ENCODE measurements at regions of chr4 and their contacts with region 1.

Region 1: DNA sequence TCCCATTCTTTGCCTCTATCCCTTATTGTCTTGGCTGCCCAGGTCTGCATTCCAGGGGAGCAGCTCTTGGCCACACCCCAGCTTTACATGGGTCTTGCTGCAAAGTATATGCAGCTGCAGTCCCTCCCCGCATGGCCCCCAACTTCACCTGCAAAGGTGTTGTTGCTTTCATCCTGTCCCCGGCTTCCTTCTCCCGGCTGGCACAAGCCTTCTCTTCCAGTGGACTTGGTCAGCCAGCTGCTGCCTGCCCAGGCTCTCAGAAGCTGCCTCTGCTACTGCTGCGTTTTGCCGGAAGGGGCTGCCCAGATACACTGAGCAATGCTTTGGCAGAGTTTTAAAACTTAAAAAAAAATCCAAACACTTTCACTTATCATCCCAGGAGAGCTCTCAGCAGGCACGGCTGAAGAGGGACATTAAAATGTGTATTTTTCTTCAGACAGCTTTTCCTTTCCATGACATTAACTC is 121.2 kb upstream of the PDLIM3 start:
- DNase-seq: peak; percentile 53
- H3K4me3 ChIP-seq: peak overlapping the region; percentile 17 to 21
- H3K27ac ChIP-seq: peak overlapping the region; percentile 77 to 78
- H3K4me1 ChIP-seq: peaks cover 7% of the 10 kb centered on the region
- H3K27me3 ChIP-seq: no peaks in the 10 kb centered on the region
- CTCF ChIP-seq: peak in 2 of 4 experiments; percentile 44 to 61
- POLR2A ChIP-seq: no peak

Region 2: GRCh38 chr4:185721190-185721932 is 64.9 kb after region 1 on chr4:
- intact Hi-C with region 1: loop called (anchors 5 kb)
- DNase-seq: no peak
- H3K4me3 ChIP-seq: no peak overlapping the region
- H3K27ac ChIP-seq: peak overlapping the region; percentile 61 to 64
- H3K4me1 ChIP-seq: peaks cover 6% of the 10 kb centered on the region
- H3K27me3 ChIP-seq: no peaks in the 10 kb centered on the region
- CTCF ChIP-seq: no peak
- POLR2A ChIP-seq: no peak

Region 3: GRCh38 chr4:185738038-185738552 is 81.6 kb after region 1 on chr4:
- intact Hi-C with region 1: loop called (anchors 5 kb)
- DNase-seq: no peak
- H3K4me3 ChIP-seq: no peak overlapping the region
- H3K27ac ChIP-seq: peak overlapping the region; percentile 45 to 62
- H3K4me1 ChIP-seq: no peaks in the 10 kb centered on the region
- H3K27me3 ChIP-seq: no peaks in the 10 kb centered on the region
- CTCF ChIP-seq: no peak
- POLR2A ChIP-seq: no peak

Region 4: GRCh38 chr4:185774845-185775680 is 118.6 kb after region 1 on chr4:
- intact Hi-C with region 1: loop called (anchors 10 kb)
- DNase-seq: no peak
- H3K4me3 ChIP-seq: no peak overlapping the region
- H3K27ac ChIP-seq: peak overlapping the region; percentile 40 to 41
- H3K4me1 ChIP-seq: no peaks in the 10 kb centered on the region
- H3K27me3 ChIP-seq: no peaks in the 10 kb centered on the region
- CTCF ChIP-seq: no peak
- POLR2A ChIP-seq: no peak

Region 5: DNA sequence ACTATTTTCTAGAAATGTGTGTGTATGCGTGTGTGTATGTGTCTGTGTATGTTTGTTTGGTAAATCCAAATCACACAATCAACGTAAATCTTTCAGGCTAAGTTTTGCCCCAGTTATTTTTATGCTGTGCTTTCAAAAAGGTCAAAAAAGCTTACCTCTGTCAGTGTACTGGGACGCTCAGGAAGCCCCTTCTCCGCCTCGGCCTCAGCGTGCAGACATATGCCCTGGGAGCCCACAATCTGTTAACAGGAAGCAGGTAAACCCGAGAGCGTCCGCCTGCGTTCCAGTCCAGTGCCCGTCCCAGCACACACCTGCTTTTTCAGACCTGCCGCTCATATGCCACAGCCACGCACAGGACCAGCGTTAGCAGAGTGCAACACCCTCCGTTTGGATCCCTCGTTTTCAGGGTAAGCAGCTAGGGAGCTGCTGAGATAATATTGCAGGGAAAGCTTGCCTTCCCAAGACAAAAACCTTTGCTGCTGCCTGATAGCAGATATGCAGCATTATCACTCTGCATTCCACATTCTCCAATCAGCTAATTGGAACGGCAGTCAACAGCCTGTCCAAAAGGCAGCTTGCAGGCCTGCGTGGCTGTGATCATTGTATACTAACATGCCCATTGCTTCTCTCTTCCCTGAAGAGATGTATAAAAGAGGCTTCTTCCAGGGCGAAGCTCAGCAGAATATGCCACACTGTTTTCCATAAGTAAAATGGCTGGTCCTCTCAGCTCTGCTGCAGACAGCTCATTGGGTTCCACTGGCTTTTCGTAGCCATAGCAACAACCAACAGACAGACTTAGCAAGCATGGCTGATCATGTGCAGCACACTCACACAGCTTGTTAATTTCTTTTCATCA is 155.2 kb after region 1 on chr4 and contains the start of gene SORBS2:
- intact Hi-C with region 1: loop called (anchors 10 kb)
- DNase-seq: peak; percentile 76
- H3K4me3 ChIP-seq: peak within 1 kb of the TSS; percentile 35 to 42
- H3K27ac ChIP-seq: peak within 1 kb of the TSS; percentile 67 to 74
- H3K4me1 ChIP-seq: no peaks in the 10 kb centered on the region
- H3K27me3 ChIP-seq: no peaks in the 10 kb centered on the region
- CTCF ChIP-seq: no peak
- POLR2A ChIP-seq: peak; percentile 21
- total RNA-seq, gene SORBS2: 175 to 242 TPM

Region 6: DNA sequence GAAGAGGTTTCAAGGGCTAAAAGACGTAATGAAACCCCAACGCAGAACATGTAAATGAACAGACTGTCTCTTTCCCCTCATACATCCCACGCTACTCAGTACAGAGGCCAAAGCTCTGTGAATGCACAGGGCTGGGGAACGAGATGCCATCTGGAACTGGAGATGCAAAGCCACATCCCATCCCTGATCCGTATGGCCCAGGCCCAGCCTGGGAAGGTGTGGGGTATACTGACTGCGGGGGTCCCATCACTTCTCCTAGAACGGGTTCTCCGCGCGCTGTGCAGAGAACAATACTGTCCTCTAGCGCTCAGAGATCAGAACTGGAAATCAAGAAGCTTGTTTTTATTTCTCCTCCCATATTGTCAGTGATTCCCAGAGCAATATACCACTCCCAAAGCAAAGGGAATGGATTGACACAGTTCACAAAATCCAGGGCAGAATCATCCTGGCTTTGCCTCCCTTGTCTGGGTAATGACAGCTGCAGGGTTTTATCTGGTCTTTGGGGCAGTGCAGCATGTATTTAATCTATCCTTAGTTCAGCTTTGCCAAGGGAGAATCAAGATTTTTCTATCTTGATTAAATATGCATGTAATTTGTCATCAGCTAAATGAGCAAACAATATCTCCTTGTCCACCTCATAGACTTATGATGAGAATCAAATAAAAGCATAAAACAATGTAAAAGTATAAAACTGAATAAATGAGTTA is 365.1 kb after region 1 on chr4:
- intact Hi-C with region 1: loop called (anchors 5 kb)
- DNase-seq: no peak
- H3K4me3 ChIP-seq: no peak overlapping the region
- H3K27ac ChIP-seq: no peak overlapping the region
- H3K4me1 ChIP-seq: no peaks in the 10 kb centered on the region
- H3K27me3 ChIP-seq: no peaks in the 10 kb centered on the region
- CTCF ChIP-seq: peak; percentile 54 to 79 (median 67)
- POLR2A ChIP-seq: no peak